ENCODE measurements at regions of chr9 and their contacts with region 1.

Region 1: DNA sequence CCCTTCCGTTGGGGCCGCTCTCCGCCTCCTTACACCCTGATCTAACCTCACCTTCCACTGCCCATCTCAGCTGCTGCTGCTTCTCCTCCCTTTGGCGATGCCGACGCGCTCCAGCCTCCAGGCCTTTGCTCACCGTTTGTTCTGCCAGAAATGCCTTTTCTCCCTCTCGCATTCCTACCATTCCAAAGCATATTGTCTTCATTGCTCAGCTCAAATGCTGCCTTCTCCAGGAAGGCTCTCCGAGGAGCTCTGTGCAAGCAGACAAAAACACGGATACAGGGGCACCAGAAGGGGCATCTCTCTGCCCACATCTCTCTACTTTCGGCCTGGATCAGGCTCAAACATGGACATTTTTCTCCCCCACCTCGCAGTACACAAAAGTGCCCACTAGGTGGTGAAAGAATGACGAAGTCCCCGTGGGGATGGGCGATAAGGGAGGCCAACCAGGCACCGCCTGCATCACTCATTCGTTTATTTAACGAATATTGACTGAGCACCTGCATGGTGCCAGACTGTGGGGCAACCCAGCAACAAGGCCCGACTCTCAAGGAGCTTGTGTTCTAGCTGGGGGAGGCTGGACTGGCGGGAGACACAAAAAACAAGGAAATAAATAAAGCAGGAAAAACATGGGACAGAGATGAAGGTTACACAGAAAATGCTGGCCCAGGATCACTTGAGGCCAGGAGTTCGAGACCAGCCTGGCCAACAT is 7.3 kb upstream of the GRHPR start:
- DNase-seq: peak; percentile 80 to 87
- ATAC-seq: peak; percentile 67 to 86
- H3K4me3 ChIP-seq: no peak overlapping the region
- H3K27ac ChIP-seq: peak overlapping the region; percentile 73 to 77
- H3K4me1 ChIP-seq: peaks cover 35% of the 10 kb centered on the region
- CTCF ChIP-seq: peak; percentile 73
- EP300 ChIP-seq: no peak
- POLR2A ChIP-seq: no peak
- RAD21 ChIP-seq: peak; percentile 67 to 69

Region 2: GRCh38 chr9:37395229-37395628 is 19.9 kb before region 1 on chr9:
- CTCF ChIA-PET with region 1: interaction called, 11 read pairs
- POLR2A ChIA-PET with region 1: no interaction called
- DNase-seq: no peak
- ATAC-seq: 0 out of 6 replicates have a peak, but pooled peaks of 1 of the 2 experiments have one; percentile 21
- H3K4me3 ChIP-seq: no peak overlapping the region
- H3K27ac ChIP-seq: no peak overlapping the region
- H3K4me1 ChIP-seq: no peaks in the 10 kb centered on the region
- CTCF ChIP-seq: no peak
- EP300 ChIP-seq: no peak
- POLR2A ChIP-seq: no peak
- RAD21 ChIP-seq: no peak

Region 3: DNA sequence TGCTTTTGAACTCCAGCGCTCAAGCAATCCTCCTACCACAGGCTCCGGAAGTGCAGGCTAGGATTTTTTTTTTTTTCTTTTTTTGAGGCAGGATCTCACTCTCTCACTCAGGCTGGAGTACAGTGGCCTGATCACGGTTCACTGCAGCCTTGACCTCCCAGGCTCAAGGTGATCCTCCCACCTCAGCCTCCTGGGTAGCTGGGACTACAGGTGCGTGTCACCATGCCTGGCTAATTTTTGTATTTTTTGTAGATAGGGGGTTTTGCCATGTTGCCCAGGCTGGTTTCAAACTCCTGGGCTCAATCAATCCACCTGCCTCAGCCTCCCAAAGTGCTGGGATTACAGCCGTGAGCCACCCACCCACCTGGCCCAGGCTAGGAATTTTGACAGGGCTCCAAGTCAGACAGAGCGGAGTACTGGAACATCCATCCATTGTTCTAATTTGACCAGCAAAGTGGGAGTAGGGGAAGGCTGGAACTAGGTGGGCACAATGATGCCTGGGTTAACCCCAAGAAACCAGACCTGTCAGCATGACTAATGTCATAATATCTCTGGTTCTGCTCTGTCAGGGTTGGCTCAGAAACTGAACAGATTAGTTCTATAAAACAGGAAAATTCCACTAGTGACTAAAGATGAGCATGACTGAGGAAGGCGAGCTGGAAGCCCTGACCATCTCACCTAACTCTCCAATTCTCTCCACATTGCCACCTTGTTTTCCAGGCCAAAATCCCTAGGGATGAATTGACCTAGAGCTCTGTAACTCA is 40.9 kb after region 1 on chr9:
- CTCF ChIA-PET with region 1: interaction called, 15 read pairs
- POLR2A ChIA-PET with region 1: no interaction called
- DNase-seq: no peak
- ATAC-seq: no peak
- H3K4me3 ChIP-seq: no peak overlapping the region
- H3K27ac ChIP-seq: no peak overlapping the region
- H3K4me1 ChIP-seq: peaks cover 57% of the 10 kb centered on the region
- CTCF ChIP-seq: no peak
- EP300 ChIP-seq: no peak
- POLR2A ChIP-seq: no peak
- RAD21 ChIP-seq: no peak

Region 4: GRCh38 chr9:37520641-37521040 is 105.5 kb after region 1 on chr9:
- CTCF ChIA-PET with region 1: no interaction called
- POLR2A ChIA-PET with region 1: no interaction called
- DNase-seq: no peak
- ATAC-seq: no peak
- H3K4me3 ChIP-seq: no peak overlapping the region
- H3K27ac ChIP-seq: no peak overlapping the region
- H3K4me1 ChIP-seq: no peaks in the 10 kb centered on the region
- CTCF ChIP-seq: no peak
- EP300 ChIP-seq: no peak
- POLR2A ChIP-seq: no peak
- RAD21 ChIP-seq: no peak